OCI-LY7 (cell line): ENCODE measurements at regions of chr17 and their contacts with region 1.

Region 1: GRCh38 chr17:21445091-21445650 is 69.0 kb downstream of the KCNJ12 start:
- DNase-seq: no peak
- H3K4me3 ChIP-seq: no peak overlapping the region
- H3K27ac ChIP-seq: no peak overlapping the region
- H3K4me1 ChIP-seq: no peaks in the 10 kb centered on the region
- CTCF ChIP-seq: no peak

Region 2: GRCh38 chr17:21174186-21174585 is 271.0 kb before region 1 on chr17:
- CTCF ChIA-PET with region 1: no interaction called
- POLR2A ChIA-PET with region 1: interaction called, 10 read pairs
- intact Hi-C with region 1: no loop called
- DNase-seq: no peak
- H3K4me3 ChIP-seq: no peak overlapping the region
- H3K27ac ChIP-seq: no peak overlapping the region
- H3K4me1 ChIP-seq: no peaks in the 10 kb centered on the region
- CTCF ChIP-seq: no peak

Region 3: GRCh38 chr17:21358707-21359482 is 86.3 kb before region 1 on chr17:
- CTCF ChIA-PET with region 1: no interaction called
- POLR2A ChIA-PET with region 1: no interaction called
- intact Hi-C with region 1: no loop called
- DNase-seq: no peak
- H3K4me3 ChIP-seq: no peak overlapping the region
- H3K27ac ChIP-seq: no peak overlapping the region
- H3K4me1 ChIP-seq: no peaks in the 10 kb centered on the region
- CTCF ChIP-seq: no peak

Region 4: GRCh38 chr17:21397341-21398190 is 47.6 kb before region 1 on chr17:
- CTCF ChIA-PET with region 1: no interaction called
- POLR2A ChIA-PET with region 1: no interaction called
- intact Hi-C with region 1: no loop called
- DNase-seq: no peak
- H3K4me3 ChIP-seq: no peak overlapping the region
- H3K27ac ChIP-seq: no peak overlapping the region
- H3K4me1 ChIP-seq: no peaks in the 10 kb centered on the region
- CTCF ChIP-seq: no peak